HCT116 (cell line): ENCODE measurements at regions of chr5 and their contacts with region 1.

Region 1: GRCh38 chr5:82225525-82226172 is 52.5 kb downstream of the RPS23 start:
- DNase-seq: peak; percentile 46
- ATAC-seq: peak; percentile 97
- H3K4me3 ChIP-seq: no peak overlapping the region
- H3K27ac ChIP-seq: no peak overlapping the region
- H3K4me1 ChIP-seq: no peaks in the 10 kb centered on the region
- H3K27me3 ChIP-seq: no peaks in the 10 kb centered on the region
- CTCF ChIP-seq: peak; percentile 64 to 92 (median 79); a peak in 5 of 6 replicates
- POLR2A ChIP-seq: no peak
- RAD21 ChIP-seq: peak; percentile 87

Region 2: DNA sequence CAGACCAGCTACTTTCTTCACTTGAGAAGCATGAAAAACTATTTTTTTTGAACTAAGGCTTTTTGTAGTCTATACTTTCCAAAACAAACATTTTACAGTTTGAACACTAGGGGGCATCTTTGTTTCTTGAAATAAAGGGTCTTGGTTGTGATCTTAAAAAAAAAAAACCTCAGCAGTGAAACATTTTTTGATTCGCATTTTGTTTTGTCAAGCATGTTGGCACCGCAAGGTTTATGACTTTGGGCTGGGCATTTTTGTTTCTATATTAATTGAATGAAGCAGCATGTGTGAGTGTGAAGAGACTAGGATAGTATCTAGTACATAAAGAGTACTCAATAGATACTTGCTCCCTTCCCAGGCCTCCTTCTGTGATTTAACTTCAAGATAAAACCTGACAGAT is 800.1 kb before region 1 on chr5:
- CTCF ChIA-PET with region 1: interaction called, 7 read pairs
- POLR2A ChIA-PET with region 1: no interaction called
- RAD21 ChIA-PET with region 1: no interaction called
- intact Hi-C with region 1: loop called (anchors 2 kb)
- DNase-seq: peak; percentile 28
- ATAC-seq: peak; percentile 67; the same call in 1 of the 2 replicates
- H3K4me3 ChIP-seq: no peak overlapping the region
- H3K27ac ChIP-seq: no peak overlapping the region
- H3K4me1 ChIP-seq: peaks cover 0 to 3% of the 10 kb centered on the region in 2 experiments; a peak in 2 of 4 replicates
- H3K27me3 ChIP-seq: no peaks in the 10 kb centered on the region
- CTCF ChIP-seq: peak; percentile 39 to 64 (median 54); a peak in 4 of 6 replicates
- POLR2A ChIP-seq: no peak
- RAD21 ChIP-seq: peak; percentile 61

Region 3: DNA sequence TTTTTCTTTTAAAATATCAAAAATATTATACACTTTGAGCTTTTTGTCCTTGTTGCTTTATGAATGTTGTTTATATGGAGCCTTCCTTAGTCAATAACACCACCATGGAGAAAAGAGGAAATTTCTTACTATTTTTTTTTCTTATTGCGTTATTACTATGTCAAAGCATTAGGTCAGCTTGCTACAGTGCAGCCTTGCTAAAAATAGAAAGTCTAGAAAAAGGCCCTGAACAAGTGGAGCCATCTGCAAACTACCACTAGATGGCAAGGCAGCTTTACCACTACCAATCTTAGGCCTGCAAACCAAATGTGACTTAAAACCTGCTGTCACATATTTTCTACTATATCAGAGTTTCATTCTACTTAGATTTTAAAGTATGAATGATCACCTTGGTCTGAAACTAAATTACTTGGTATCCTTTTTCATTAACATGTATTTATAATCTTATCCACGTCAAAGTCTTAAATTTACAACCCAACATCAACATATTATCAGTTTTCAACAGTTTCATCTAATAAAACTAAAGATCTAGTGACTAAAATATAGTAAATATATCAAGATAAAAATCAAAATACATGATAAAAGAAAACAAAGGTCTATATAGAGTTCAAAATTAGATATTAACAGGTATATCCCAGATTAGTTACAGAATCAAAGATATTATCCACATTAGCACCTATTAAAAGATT is 718.6 kb before region 1 on chr5:
- CTCF ChIA-PET with region 1: no interaction called
- POLR2A ChIA-PET with region 1: no interaction called
- RAD21 ChIA-PET with region 1: no interaction called
- intact Hi-C with region 1: loop called (anchors 1 kb)
- DNase-seq: peak; percentile 77
- ATAC-seq: peak; percentile 99
- H3K4me3 ChIP-seq: no peak overlapping the region
- H3K27ac ChIP-seq: no peak overlapping the region
- H3K4me1 ChIP-seq: peaks cover 0 to 5% of the 10 kb centered on the region in 2 experiments; a peak in 2 of 4 replicates
- H3K27me3 ChIP-seq: no peaks in the 10 kb centered on the region
- CTCF ChIP-seq: peak; percentile 76 to 91 (median 84)
- POLR2A ChIP-seq: no peak
- RAD21 ChIP-seq: peak; percentile 92

Region 4: GRCh38 chr5:82018462-82018861 is 207.2 kb before region 1 on chr5:
- CTCF ChIA-PET with region 1: no interaction called
- POLR2A ChIA-PET with region 1: no interaction called
- RAD21 ChIA-PET with region 1: no interaction called
- intact Hi-C with region 1: no loop called
- DNase-seq: no peak
- ATAC-seq: no peak
- H3K4me3 ChIP-seq: no peak overlapping the region
- H3K27ac ChIP-seq: no peak overlapping the region
- H3K4me1 ChIP-seq: no peaks in the 10 kb centered on the region
- H3K27me3 ChIP-seq: no peaks in the 10 kb centered on the region
- CTCF ChIP-seq: no peak
- POLR2A ChIP-seq: no peak
- RAD21 ChIP-seq: no peak

Region 5: DNA sequence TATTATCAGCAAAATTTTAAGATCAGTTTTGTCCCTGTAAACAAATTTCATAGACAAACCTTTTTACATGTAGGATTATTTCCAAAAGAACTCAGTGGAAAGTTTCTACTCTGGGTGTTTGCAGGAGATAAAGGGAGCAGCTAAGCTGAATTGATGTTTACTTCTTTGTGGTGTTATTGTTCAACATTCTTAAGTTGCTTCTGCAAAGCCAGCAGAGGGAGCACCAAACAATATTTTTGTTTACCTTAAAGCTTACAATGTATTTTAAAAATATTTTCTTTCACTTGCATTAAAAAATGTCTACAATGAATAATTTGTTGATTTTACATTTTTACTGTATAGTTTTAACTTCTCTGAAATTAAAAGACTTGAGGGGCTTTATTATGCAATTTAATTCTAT is 118.4 kb before region 1 on chr5:
- CTCF ChIA-PET with region 1: interaction called, 6 read pairs
- POLR2A ChIA-PET with region 1: no interaction called
- RAD21 ChIA-PET with region 1: no interaction called
- intact Hi-C with region 1: loop called (anchors 1 kb)
- DNase-seq: no peak
- ATAC-seq: no peak
- H3K4me3 ChIP-seq: no peak overlapping the region
- H3K27ac ChIP-seq: no peak overlapping the region
- H3K4me1 ChIP-seq: no peaks in the 10 kb centered on the region
- H3K27me3 ChIP-seq: no peaks in the 10 kb centered on the region
- CTCF ChIP-seq: peak in 2 of 3 experiments; percentile 52; a peak in 4 of 6 replicates
- POLR2A ChIP-seq: no peak
- RAD21 ChIP-seq: peak; percentile 37

Region 6: GRCh38 chr5:82174128-82174918 is 51.3 kb before region 1 on chr5:
- CTCF ChIA-PET with region 1: no interaction called
- POLR2A ChIA-PET with region 1: no interaction called
- RAD21 ChIA-PET with region 1: no interaction called
- intact Hi-C with region 1: loop called (anchors 1 kb)
- DNase-seq: peak; percentile 60
- ATAC-seq: peak; percentile 85
- H3K4me3 ChIP-seq: no peak overlapping the region
- H3K27ac ChIP-seq: no peak overlapping the region
- H3K4me1 ChIP-seq: no peaks in the 10 kb centered on the region
- H3K27me3 ChIP-seq: no peaks in the 10 kb centered on the region
- CTCF ChIP-seq: peak; percentile 34 to 93 (median 84); a peak in 5 of 6 replicates
- POLR2A ChIP-seq: no peak
- RAD21 ChIP-seq: peak; percentile 46